ENCODE measurements at regions of chr4 and their contacts with region 1.

Region 1: DNA sequence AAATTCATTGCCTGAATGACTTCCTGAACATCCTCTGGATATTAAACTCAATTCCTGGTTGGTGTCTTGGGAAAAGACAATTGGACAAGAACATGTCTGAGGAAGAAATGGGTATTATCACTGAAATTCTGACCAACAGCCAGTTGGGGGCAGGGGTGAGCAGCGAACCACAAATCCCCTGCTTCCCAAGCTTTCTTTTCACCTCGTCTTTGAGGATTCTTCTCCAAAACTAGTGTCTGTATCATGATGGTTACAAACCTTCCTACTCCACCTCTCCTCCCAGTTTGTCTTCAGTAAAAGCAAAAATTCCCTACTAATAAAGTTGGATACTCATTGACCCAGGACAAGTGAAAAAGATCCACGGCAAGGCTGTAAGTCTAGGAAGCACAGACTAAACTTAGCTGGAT is 48.3 kb upstream of the WDR1 start:
- DNase-seq: no peak
- ATAC-seq: peak; percentile 45
- H3K4me3 ChIP-seq: no peak overlapping the region
- H3K27ac ChIP-seq: no peak overlapping the region
- H3K4me1 ChIP-seq: no peaks in the 10 kb centered on the region
- H3K27me3 ChIP-seq: no peaks in the 10 kb centered on the region
- CTCF ChIP-seq: peak; percentile 59

Region 2: DNA sequence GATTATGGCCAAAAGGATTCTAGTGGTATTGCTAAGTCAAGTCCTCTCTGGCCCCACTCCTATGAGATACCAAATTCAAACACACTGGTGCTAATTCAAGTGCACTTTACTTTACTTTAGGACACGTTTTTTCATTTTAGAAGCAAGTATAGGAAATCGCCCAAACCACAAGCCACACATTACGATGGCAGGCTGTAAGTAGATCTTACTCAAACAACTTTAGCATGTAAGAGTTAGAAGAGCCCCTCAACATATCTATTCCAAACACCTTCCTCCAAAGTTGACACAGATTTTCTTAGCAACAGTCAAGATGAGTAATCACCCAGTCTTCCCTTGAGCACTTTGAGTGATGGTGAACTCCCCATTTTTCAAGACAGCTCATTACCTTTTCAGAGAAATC is 339.8 kb before region 1 on chr4:
- intact Hi-C with region 1: no loop called
- DNase-seq: no peak
- ATAC-seq: peak; percentile 75
- H3K4me3 ChIP-seq: no peak overlapping the region
- H3K27ac ChIP-seq: no peak overlapping the region
- H3K4me1 ChIP-seq: no peaks in the 10 kb centered on the region
- H3K27me3 ChIP-seq: no peaks in the 10 kb centered on the region
- CTCF ChIP-seq: no peak

Region 3: GRCh38 chr4:10403633-10404445 is 239.0 kb after region 1 on chr4:
- intact Hi-C with region 1: loop called (anchors 10 kb)
- DNase-seq: no peak
- ATAC-seq: peak; percentile 67
- H3K4me3 ChIP-seq: no peak overlapping the region
- H3K27ac ChIP-seq: no peak overlapping the region
- H3K4me1 ChIP-seq: no peaks in the 10 kb centered on the region
- H3K27me3 ChIP-seq: no peaks in the 10 kb centered on the region
- CTCF ChIP-seq: peak; percentile 48

Region 4: GRCh38 chr4:10454726-10455125 is 289.8 kb after region 1 on chr4:
- intact Hi-C with region 1: no loop called
- DNase-seq: no peak
- ATAC-seq: no peak
- H3K4me3 ChIP-seq: no peak overlapping the region
- H3K27ac ChIP-seq: no peak overlapping the region
- H3K4me1 ChIP-seq: peaks cover 4% of the 10 kb centered on the region
- H3K27me3 ChIP-seq: no peaks in the 10 kb centered on the region
- CTCF ChIP-seq: no peak

Region 5: GRCh38 chr4:10466161-10466560 is 301.3 kb after region 1 on chr4:
- intact Hi-C with region 1: no loop called
- DNase-seq: no peak
- ATAC-seq: no peak
- H3K4me3 ChIP-seq: no peak overlapping the region
- H3K27ac ChIP-seq: no peak overlapping the region
- H3K4me1 ChIP-seq: no peaks in the 10 kb centered on the region
- H3K27me3 ChIP-seq: peaks cover 32% of the 10 kb centered on the region
- CTCF ChIP-seq: no peak